MCF 10A (cell line): ENCODE measurements at regions of chr4 and their contacts with region 1.

Region 1: GRCh38 chr4:2441393-2442174 is 22.8 kb downstream of the CFAP99 start:
- DNase-seq: peak; percentile 68
- H3K4me3 Mint-ChIP-seq: no peak overlapping the region
- H3K27ac Mint-ChIP-seq: no peak overlapping the region
- H3K4me1 Mint-ChIP-seq: no peaks in the 10 kb centered on the region
- H3K27me3 Mint-ChIP-seq: no peaks in the 10 kb centered on the region
- CTCF ChIP-seq: peak; percentile 47

Region 2: DNA sequence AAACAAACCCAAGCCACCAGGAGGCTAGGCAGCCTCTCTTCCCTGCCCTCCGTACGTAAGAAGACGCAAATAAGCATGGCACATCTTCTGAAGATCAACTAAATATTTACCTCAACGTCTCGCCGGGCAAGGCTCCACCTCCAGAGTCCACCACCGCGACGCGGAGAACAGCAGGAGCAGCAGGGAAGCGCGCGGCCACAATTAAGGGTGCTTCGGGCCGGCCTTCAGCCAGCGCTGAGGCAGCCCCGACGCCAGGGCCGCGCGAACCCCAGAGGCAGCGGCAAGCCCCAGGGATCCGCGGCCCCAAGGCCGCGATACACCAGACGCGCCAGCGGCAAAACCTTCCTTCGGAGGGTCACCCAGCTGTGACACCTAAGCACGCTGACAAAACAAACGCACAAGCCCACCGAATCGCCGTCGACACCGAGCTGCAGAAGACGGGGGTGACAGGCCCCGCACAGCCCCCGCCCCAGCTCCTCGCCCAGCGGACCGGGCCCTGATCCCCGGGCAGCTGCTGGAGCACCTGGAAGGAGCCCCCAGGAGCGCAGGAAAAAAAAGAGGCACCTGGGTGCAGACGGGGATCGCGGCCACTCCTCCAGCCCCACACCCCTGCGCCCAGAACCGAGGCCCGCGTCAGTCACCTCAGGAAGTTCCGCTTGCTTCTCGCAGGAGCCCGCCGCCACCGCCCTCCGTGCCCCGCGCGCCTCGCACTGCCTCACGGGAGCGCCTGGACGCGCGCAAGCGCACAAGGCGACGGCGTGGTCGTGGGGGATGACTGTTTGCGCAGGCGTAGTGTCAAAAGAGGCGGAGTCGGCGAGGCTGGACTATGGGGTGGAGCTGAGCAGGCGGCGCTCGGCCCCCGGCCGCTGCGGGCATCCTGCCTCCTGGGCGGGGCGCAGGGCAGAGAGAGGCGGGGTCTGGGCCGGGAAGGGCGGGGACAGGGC is 199.9 kb before region 1 on chr4 and contains the starts of genes HAUS3 and POLN:
- CTCF ChIA-PET with region 1: no interaction called
- POLR2A ChIA-PET with region 1: no interaction called
- intact Hi-C with region 1: no loop called
- DNase-seq: peak; percentile 98
- H3K4me3 Mint-ChIP-seq: peak within 1 kb of the TSS; percentile 80
- H3K27ac Mint-ChIP-seq: peak within 1 kb of the TSS; percentile 90
- H3K4me1 Mint-ChIP-seq: peaks cover 43% of the 10 kb centered on the region
- H3K27me3 Mint-ChIP-seq: no peaks in the 10 kb centered on the region
- CTCF ChIP-seq: no peak
- total RNA-seq, gene HAUS3: 13.3 and 13.9 TPM in 2 replicates
- total RNA-seq, gene POLN: 2.8 and 3.1 TPM in 2 replicates

Region 3: DNA sequence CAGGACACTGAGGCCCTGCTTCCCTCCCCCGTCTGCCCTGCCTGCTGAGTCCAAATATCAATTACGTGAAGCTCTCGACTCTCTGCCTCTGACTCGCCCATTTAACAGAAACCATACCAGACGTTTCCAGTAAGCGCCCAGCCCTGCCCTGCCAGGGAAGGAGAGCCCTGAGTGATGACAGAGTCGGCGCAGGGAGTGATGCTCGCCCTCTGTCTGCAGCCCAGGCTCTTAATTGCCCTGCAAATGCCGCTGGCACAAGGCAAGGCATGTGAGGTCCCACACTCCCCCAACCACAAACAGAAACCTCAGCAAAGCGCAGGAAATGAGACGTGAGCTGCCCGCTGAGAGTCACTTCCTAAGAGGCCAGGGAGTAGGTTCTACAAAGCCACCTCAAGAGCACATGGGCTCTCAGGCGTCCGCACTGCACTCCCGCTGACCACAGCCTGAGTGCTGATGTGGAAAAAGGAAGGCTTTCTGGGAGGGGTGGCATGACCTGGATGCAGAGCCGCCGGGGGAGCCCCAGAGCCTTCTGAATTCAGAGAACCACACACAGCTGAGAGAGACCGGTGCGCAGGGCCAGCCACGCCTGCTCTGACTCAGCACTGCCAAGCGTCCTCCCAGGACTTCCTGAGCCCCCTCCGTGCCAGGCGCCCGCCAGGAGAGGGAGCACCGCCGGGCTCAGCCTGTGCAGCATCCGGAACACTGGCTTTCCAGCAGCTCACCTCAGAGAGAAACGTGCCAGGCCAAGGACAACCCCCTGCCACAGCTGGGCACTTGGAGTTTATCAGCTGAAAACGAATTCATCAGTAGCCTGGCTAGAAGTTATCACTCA is 28.5 kb before region 1 on chr4:
- CTCF ChIA-PET with region 1: interaction called, 3 read pairs
- POLR2A ChIA-PET with region 1: no interaction called
- intact Hi-C with region 1: loop called (anchors 2 kb)
- DNase-seq: peak; percentile 94
- H3K4me3 Mint-ChIP-seq: peak overlapping the region; percentile 71
- H3K27ac Mint-ChIP-seq: peak overlapping the region; percentile 90
- H3K4me1 Mint-ChIP-seq: peaks cover 10% of the 10 kb centered on the region
- H3K27me3 Mint-ChIP-seq: peaks cover 11% of the 10 kb centered on the region
- CTCF ChIP-seq: peak; percentile 52

Region 4: DNA sequence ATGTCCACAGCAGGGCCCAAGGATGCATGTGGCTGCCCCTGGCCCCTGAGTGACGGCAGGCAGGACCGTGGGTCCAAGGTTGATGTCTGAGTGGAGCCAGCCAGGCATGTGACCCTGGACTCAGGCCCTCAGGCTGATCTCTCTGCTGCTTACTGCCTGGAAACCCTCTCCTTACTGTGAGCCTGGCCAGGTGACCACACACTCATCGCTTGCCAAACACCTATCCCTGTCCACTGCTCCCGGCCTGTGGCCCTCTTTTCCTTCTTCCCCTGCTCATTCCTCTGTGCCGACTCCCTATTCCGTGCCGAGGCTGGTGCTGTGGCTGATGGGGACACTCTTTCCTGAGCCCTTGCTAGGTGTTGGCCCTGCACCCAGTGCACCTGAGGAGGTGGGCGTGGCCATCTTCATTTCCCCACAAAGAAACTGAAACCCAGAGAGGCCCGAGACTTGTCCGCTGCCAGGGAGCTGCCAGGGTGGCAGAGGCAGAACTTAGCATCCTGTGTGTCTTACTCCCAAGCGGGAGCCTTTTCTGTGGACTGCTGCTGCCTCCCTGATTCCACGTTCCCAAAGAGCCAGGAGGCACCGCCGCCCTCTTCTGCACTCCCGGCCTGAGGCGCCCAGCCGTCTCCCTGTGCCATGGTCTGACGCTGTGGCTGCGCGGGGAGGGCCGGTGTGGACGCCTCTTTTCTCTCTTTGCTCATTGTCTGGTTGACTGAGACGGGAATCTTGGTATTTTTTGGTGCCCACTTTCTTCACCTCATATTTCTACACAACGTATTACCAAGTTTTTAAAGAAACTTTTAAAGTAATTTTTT is 16.1 kb after region 1 on chr4:
- CTCF ChIA-PET with region 1: no interaction called
- POLR2A ChIA-PET with region 1: no interaction called
- intact Hi-C with region 1: no loop called
- DNase-seq: no peak
- H3K4me3 Mint-ChIP-seq: no peak overlapping the region
- H3K27ac Mint-ChIP-seq: no peak overlapping the region
- H3K4me1 Mint-ChIP-seq: peaks cover 6% of the 10 kb centered on the region
- H3K27me3 Mint-ChIP-seq: no peaks in the 10 kb centered on the region
- CTCF ChIP-seq: no peak